ENCODE measurements at regions of chr4 and their contacts with region 1.

Region 1: DNA sequence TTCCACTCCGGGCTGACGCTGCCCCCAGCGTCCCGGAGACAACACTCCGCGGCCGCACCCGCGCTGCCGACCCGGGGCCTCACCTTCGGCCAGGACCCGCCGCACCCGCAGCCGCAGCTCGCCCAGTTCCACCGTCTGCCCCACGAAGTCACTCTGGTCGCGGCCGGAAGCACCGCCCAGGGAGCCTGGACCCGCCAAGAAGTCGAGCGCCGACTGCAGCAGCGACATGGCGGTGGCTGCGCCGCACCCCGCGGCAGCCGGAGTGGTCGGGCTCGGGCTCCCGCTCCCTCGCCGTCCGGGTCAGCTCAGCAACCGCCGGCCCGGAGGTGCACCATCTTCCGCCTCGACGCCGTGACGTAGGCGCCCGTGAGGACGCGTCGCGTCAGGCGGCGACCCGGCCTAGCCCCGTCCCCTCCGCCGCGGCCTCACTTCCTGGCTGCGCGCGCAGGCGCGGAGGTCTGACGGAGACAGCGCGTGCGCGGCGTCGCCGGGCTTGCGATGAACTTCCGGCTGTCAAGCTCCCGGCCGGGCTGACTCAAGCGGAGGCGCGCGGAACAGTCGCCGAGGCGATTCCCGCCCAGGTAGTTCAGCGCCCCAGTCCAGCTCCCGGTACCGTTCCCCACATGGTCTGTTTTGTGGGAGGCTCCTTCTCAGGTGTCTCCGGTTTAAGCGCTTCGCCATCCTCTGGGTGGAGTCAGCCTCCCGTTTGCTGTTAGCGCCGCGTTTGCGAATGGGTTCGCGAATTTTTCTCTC is at the starts of genes GAK and TMEM175:
- DNase-seq: peak; percentile 96
- ATAC-seq: peak; percentile 95
- H3K4me3 Mint-ChIP-seq: peak within 1 kb of the TSS; percentile 91
- H3K27ac Mint-ChIP-seq: peak within 1 kb of the TSS; percentile 96
- H3K4me1 Mint-ChIP-seq: peaks cover 45% of the 10 kb centered on the region
- H3K27me3 Mint-ChIP-seq: no peaks in the 10 kb centered on the region
- CTCF ChIP-seq: no peak
- total RNA-seq, gene GAK: 97.8 to 102 TPM
- total RNA-seq, gene TMEM175: 11.0 to 11.2 TPM

Region 2: GRCh38 chr4:879729-880077 is 52.4 kb before region 1 on chr4:
- CTCF ChIA-PET with region 1: no interaction called
- POLR2A ChIA-PET with region 1: interaction called, 25 read pairs
- intact Hi-C with region 1: loop called (anchors 2 kb)
- DNase-seq: peak; percentile 83
- ATAC-seq: peak; percentile 93
- H3K4me3 Mint-ChIP-seq: peak overlapping the region; percentile 69
- H3K27ac Mint-ChIP-seq: peak overlapping the region; percentile 99
- H3K4me1 Mint-ChIP-seq: peaks cover 26% of the 10 kb centered on the region
- H3K27me3 Mint-ChIP-seq: no peaks in the 10 kb centered on the region
- CTCF ChIP-seq: no peak

Region 3: DNA sequence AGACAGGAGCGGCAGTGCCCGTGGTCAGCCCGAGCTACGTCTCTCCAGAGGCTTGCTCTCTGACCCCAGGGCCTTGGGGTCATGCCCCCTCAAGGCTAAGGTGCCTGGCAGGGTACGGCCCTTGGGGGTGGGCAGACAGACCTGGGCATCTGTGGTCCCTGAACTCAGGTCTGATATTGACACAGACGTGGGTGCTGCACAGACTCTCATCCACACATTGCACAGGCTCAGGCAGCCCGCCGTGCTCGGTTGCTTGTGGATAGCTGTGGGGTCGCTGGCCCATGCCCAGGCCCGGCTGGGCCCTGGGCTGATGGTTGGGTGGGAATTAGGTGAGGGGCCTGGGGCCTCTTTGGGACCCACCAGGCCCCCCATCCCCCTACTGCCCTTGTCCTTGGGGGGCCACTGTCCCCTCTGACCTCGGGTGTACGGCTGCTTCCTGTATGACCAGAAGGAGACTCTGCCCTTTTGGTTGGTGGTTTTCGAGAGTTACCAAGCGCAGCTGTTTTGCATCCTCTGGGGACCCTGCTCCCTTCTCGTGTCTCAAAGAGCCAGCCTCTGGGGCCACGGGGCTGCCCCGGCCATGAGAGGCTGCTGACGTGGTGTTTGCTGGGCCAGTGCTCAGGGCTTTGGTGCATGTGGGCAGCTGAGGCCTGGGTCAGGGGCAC is 89.4 kb after region 1 on chr4:
- CTCF ChIA-PET with region 1: no interaction called
- POLR2A ChIA-PET with region 1: no interaction called
- intact Hi-C with region 1: no loop called
- DNase-seq: no peak
- ATAC-seq: no peak
- H3K4me3 Mint-ChIP-seq: no peak overlapping the region
- H3K27ac Mint-ChIP-seq: no peak overlapping the region
- H3K4me1 Mint-ChIP-seq: peaks cover 6% of the 10 kb centered on the region
- H3K27me3 Mint-ChIP-seq: no peaks in the 10 kb centered on the region
- CTCF ChIP-seq: no peak